ENCODE measurements at regions of chr12 and their contacts with region 1.

Region 1: DNA sequence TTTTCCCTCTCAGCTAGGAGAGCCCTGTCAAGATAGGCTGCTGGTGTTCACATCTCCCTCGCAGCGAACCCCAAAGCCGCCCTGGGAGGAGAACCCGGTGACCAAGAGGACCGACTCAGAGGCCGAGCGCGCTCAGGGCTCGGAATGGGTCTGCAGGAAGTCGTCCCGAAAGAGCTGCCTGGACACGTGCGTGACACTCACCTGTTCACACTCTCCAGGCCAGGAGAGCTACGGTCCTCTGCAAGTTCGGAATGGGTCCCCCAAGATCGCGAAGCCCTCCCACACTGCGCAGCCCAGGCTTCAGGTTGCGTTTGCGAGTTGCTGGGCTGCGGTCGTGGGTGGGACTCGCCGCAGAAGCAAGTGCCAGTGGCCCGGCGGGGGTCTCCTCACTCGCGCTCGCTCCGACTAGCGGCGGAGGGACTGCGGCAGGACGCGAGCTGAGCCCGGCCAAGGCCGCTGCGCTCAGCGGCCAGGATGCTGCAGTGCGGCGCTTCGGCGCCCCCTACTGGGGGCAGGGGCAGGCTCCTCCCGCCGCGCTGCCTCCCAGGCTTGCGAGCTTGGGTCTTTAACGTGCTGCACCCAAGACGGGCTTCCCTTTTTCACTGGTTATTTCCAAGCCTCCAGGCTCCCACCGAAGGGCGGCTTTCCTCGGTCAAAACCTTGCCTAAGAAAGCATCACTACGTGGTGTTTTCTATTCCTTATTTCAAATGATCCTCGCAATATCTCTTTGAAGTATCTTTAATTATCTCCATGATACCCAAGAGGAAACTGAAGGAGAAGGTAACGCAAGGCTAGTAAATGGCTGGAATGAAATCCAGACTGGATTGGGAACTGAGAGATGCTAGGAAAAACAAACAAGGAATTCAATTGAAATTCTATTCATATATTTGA is at the start of gene RERG:
- DNase-seq: peak; percentile 89
- ATAC-seq: peak; percentile 97
- H3K4me3 Mint-ChIP-seq: peak within 1 kb of the TSS; percentile 75
- H3K27ac Mint-ChIP-seq: no peak within 1 kb of the TSS
- H3K4me1 Mint-ChIP-seq: peaks cover 15% of the 10 kb centered on the region
- H3K27me3 Mint-ChIP-seq: peaks cover 31% of the 10 kb centered on the region
- CTCF ChIP-seq: peak; percentile 93
- total RNA-seq, gene RERG: 0.21 to 0.73 TPM (median 0.28 TPM) in 3 replicates

Region 2: GRCh38 chr12:15001733-15002382 is 219.4 kb before region 1 on chr12:
- CTCF ChIA-PET with region 1: interaction called, 17 read pairs
- POLR2A ChIA-PET with region 1: no interaction called
- DNase-seq: peak; percentile 34
- ATAC-seq: peak; percentile 98
- H3K4me3 Mint-ChIP-seq: no peak overlapping the region
- H3K27ac Mint-ChIP-seq: no peak overlapping the region
- H3K4me1 Mint-ChIP-seq: peaks cover 12% of the 10 kb centered on the region
- H3K27me3 Mint-ChIP-seq: no peaks in the 10 kb centered on the region
- CTCF ChIP-seq: no peak

Region 3: DNA sequence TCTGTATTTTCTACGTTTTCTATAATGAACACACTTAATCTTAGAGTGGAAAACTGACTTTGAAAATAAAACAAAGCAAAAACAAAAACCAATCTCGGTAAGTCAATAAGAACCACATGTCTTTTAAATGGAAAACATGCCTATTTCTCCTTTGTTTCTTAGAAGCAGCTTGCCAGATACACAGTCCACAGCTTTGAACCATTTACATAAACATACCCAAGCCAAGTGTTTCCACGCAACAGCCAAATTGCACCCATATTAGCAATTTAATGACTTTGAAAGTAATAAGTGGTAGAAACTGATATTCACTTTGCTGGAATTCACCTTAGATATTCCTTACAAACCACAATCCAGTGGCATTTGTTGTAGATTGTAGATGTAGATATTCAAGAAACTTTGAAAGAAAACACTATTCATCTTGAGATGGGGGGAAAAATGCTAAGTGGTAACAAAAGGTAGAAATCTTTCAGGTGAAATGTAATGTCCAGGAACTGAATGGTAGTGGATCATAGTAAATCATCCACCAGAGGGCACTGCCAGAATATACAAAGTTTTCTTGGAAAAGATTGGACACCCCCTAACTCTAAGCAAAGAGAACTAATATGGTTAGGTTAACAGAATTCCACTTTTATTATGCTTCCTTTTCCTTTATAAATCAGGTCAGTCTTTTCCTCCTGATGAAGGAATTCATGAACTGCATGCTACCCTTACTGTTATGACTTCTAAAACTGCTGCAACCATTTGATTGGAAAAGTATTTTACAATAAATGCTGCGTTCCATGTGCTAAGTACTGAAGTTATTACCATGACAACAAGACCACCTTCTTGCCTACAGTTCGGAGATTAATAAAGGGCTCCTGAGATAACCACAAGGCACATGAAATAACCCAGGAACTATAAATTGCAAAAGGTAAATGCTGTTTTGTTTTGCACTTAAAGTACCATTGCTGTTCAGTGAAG is 69.8 kb before region 1 on chr12:
- CTCF ChIA-PET with region 1: interaction called, 48 read pairs
- POLR2A ChIA-PET with region 1: no interaction called
- DNase-seq: no peak
- ATAC-seq: peak; percentile 22; the same call in 1 of the 2 replicates
- H3K4me3 Mint-ChIP-seq: no peak overlapping the region
- H3K27ac Mint-ChIP-seq: no peak overlapping the region
- H3K4me1 Mint-ChIP-seq: peaks cover 5% of the 10 kb centered on the region
- H3K27me3 Mint-ChIP-seq: no peaks in the 10 kb centered on the region
- CTCF ChIP-seq: no peak

Region 4: DNA sequence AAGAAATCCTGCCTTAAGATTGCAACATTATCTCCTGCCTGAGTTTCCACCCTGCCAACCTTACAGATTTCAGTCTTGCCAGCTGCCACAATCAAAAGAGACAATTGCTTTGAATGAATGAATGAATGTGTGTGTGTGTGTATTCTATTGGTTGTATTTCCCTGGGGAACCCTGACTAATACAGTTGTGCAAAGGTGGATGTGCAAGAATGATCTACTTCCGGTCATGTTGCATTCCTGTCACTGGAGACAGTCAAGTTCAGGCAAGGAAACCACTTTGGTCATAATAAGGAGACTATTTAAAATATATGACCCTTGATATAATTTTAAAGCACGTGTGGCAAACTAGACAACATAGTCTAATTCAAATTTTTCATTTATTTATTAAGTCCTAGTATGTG is 13.1 kb before region 1 on chr12:
- CTCF ChIA-PET with region 1: interaction called, 32 read pairs
- POLR2A ChIA-PET with region 1: no interaction called
- DNase-seq: no peak
- ATAC-seq: no peak
- H3K4me3 Mint-ChIP-seq: no peak overlapping the region
- H3K27ac Mint-ChIP-seq: no peak overlapping the region
- H3K4me1 Mint-ChIP-seq: peaks cover 27% of the 10 kb centered on the region
- H3K27me3 Mint-ChIP-seq: no peaks in the 10 kb centered on the region
- CTCF ChIP-seq: no peak

Measured in WTC11 (cell line).